Activated naive CD4-positive, alpha-beta T cell treated with anti-CD3 and anti-CD28 coated beads, Interleukin-2, amount 10 ng/mL, durations not matched to agents 7 days and 5 days (primary cell): ENCODE measurements at regions of chr1 and their contacts with region 1.

Region 1: GRCh38 chr1:214328770-214329469 is 48.0 kb downstream of the SMYD2 start:
- DNase-seq: peak; percentile 86
- H3K4me3 Mint-ChIP-seq: no peak overlapping the region
- H3K27ac Mint-ChIP-seq: no peak overlapping the region
- H3K4me1 Mint-ChIP-seq: peaks cover 2% of the 10 kb centered on the region
- H3K27me3 Mint-ChIP-seq: no peaks in the 10 kb centered on the region

Region 2: GRCh38 chr1:214213136-214213535 is 115.8 kb before region 1 on chr1:
- CTCF ChIA-PET with region 1: interaction called, 252 read pairs
- DNase-seq: no peak
- H3K4me3 Mint-ChIP-seq: no peak overlapping the region
- H3K27ac Mint-ChIP-seq: no peak overlapping the region
- H3K4me1 Mint-ChIP-seq: no peaks in the 10 kb centered on the region
- H3K27me3 Mint-ChIP-seq: peaks cover 32% of the 10 kb centered on the region

Region 3: DNA sequence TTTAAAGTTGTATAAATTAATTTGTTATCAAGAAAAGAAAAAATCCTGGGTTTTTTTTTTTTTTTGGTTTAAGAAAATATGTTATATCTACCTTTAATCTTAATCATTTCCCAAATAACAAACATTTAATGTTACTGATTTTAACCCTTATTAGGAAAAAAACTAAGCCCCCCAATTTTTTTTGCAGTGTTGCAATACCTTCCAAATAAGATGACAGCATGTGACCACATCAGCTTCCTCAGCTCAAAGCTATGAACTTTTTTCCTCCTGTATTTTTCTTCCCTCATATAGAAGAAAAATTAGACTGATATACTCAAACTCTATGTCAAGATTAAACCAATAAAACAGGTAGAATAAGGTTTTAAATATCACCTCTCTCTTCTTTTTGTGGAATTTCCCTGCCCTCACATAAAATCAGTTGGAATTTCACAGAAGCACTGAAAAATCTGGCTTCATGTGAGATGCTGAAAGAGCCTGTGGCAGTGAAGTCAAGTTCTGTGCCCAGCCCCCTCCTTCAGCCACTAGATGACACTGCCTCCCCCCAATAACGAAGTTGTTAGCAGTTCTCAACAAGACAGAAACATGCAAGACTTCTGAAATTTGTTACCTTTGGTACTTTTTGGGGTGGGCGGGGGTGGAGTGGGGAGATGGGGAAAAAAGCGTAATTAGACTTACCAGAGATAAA is 57.6 kb before region 1 on chr1:
- CTCF ChIA-PET with region 1: interaction called, 21 read pairs
- DNase-seq: no peak
- H3K4me3 Mint-ChIP-seq: no peak overlapping the region
- H3K27ac Mint-ChIP-seq: no peak overlapping the region
- H3K4me1 Mint-ChIP-seq: no peaks in the 10 kb centered on the region
- H3K27me3 Mint-ChIP-seq: peaks cover 26% of the 10 kb centered on the region

Region 4: GRCh38 chr1:214310777-214311690 is 17.9 kb before region 1 on chr1:
- CTCF ChIA-PET with region 1: interaction called, 79 read pairs
- DNase-seq: no peak
- H3K4me3 Mint-ChIP-seq: peak overlapping the region; percentile 53
- H3K27ac Mint-ChIP-seq: peak overlapping the region; percentile 30
- H3K4me1 Mint-ChIP-seq: peaks cover 26% of the 10 kb centered on the region
- H3K27me3 Mint-ChIP-seq: no peaks in the 10 kb centered on the region

Region 5: DNA sequence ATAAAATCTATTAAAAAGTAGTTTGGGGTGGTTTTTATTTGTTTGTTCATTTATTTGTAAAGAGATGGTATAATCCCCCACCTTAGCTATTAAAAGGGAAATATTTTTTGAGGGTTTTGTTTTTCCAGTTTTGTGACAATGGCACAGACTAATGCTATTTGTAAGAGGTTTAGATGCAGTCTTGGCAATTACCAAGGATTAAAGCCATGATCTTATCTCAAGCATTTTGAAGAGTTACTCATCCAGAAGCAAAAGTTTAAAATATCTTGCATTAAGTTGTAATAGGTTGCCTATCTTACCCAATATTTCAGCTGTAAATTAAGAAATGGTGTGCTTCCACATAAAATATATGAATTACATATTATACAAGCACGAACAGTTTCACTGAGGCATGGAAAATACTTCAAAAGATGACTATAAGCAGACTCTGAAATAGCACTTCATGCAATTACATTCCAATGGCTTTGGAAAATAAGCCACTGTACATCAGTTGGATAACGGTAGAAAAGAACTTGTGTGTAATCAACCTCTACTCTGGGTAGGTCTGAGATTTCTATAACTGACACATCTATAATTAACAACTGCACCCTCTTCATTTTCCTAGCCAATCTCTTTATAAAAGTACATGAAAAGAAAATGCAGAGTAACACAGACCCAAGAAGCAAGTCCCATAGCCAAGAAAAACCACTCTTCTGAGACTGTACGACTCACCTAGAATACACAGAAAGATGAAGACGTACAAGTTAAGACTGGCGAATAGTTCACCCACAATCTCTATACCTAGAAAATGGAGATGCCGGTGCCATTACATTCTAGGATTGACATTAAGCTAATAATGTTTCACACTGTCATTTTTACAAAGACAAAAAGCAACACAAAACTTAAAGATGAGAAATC is 127.3 kb after region 1 on chr1:
- CTCF ChIA-PET with region 1: interaction called, 10 read pairs
- DNase-seq: no peak
- H3K4me3 Mint-ChIP-seq: no peak overlapping the region
- H3K27ac Mint-ChIP-seq: no peak overlapping the region
- H3K4me1 Mint-ChIP-seq: peaks cover 4% of the 10 kb centered on the region
- H3K27me3 Mint-ChIP-seq: peaks cover 4% of the 10 kb centered on the region

Region 6: GRCh38 chr1:214590696-214591095 is 261.8 kb after region 1 on chr1:
- CTCF ChIA-PET with region 1: interaction called, 252 read pairs
- DNase-seq: no peak
- H3K4me3 Mint-ChIP-seq: no peak overlapping the region
- H3K27ac Mint-ChIP-seq: no peak overlapping the region
- H3K4me1 Mint-ChIP-seq: no peaks in the 10 kb centered on the region
- H3K27me3 Mint-ChIP-seq: peaks cover 22% of the 10 kb centered on the region

Region 7: GRCh38 chr1:214637722-214638458 is 309.0 kb after region 1 on chr1:
- CTCF ChIA-PET with region 1: interaction called, 13 read pairs
- DNase-seq: peak; percentile 48
- H3K4me3 Mint-ChIP-seq: peak overlapping the region; percentile 39
- H3K27ac Mint-ChIP-seq: no peak overlapping the region
- H3K4me1 Mint-ChIP-seq: peaks cover 9% of the 10 kb centered on the region
- H3K27me3 Mint-ChIP-seq: no peaks in the 10 kb centered on the region